ENCODE measurements at regions of chr6 and their contacts with region 1.

Region 1: GRCh38 chr6:55250400-55250799 is 76.1 kb downstream of the HCRTR2 start:
- DNase-seq: no peak
- H3K4me3 ChIP-seq: no peak overlapping the region
- H3K27ac ChIP-seq: no peak overlapping the region
- H3K4me1 ChIP-seq: no peaks in the 10 kb centered on the region
- H3K27me3 ChIP-seq: no peaks in the 10 kb centered on the region
- CTCF ChIP-seq: no peak

Region 2: DNA sequence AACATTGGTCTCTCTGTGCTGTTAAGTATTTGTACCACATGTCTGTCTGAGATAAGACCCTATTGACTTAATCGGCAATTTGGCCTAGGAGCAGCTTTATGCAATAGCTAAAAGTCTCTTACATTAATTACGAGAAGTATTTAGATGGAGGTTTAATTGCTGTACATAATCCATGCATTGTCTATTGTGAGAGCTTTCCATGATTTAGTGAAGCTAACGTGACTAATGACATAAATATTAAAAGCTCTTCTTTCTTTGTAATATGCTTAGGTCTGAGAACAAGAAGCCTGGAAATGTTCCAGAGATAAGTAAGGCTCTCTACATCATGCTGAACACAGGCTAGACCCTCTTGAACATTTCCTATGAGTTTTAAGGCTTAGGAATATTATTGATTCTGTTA is 436.5 kb before region 1 on chr6:
- CTCF ChIA-PET with region 1: no interaction called
- POLR2A ChIA-PET with region 1: no interaction called
- intact Hi-C with region 1: loop called (anchors 5 kb)
- DNase-seq: peak; percentile 68
- H3K4me3 ChIP-seq: no peak overlapping the region
- H3K27ac ChIP-seq: no peak overlapping the region
- H3K4me1 ChIP-seq: peaks cover 8% of the 10 kb centered on the region
- H3K27me3 ChIP-seq: peaks cover 23% of the 10 kb centered on the region
- CTCF ChIP-seq: no peak

Region 3: GRCh38 chr6:54897462-54898189 is 352.8 kb before region 1 on chr6:
- CTCF ChIA-PET with region 1: no interaction called
- POLR2A ChIA-PET with region 1: no interaction called
- intact Hi-C with region 1: no loop called
- DNase-seq: no peak
- H3K4me3 ChIP-seq: no peak overlapping the region
- H3K27ac ChIP-seq: no peak overlapping the region
- H3K4me1 ChIP-seq: no peaks in the 10 kb centered on the region
- H3K27me3 ChIP-seq: no peaks in the 10 kb centered on the region
- CTCF ChIP-seq: no peak